ENCODE measurements at regions of chr17 and their contacts with region 1.

Region 1: GRCh38 chr17:81860756-81861518 is 602 bp upstream of the P4HB start:
- DNase-seq: peak; percentile 99
- H3K4me3 Mint-ChIP-seq: peak overlapping the region; percentile 91
- H3K27ac Mint-ChIP-seq: peak overlapping the region; percentile 94
- H3K4me1 Mint-ChIP-seq: peaks cover 31% of the 10 kb centered on the region
- H3K27me3 Mint-ChIP-seq: peaks cover 3% of the 10 kb centered on the region

Region 2: DNA sequence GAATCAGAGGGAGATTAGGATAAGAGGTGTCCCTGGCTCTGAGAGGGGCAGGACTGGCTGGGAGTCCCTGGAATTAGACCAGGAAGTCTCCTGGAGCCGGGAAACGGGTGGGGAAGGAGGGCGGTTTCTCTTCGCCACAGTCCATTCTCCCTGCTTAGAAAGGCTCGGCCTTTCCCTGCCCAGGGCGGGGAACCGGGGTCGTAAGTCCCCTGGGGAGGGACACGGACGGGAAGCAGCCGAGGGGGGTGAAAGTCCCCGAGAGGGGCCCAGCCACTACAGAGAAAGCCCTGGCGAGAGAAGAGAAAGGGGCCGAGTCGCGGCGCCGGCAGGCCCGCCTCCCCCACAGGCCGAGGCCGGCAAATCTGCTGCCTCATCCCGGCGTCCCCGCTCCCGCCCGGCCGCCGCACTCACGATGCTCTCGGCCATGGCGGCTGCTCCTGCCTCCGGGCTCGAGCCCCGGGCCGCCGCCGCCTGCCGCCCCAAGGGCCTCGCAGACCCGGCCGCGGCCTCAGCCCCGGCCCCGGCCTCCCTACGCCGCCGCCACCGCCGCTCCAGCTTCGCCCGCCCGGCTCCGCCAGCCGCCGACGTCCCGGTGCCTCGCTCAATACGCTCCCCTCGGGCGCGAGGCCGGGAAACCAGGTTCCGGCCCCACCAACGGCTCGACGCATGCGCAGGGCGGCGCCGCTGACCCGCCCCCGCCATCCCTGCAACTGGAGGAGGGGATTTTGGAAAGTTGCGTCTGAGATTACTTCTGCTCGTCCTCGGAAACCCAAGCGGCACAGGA is 224.2 kb before region 1 on chr17 and contains the starts of genes NPLOC4 and TSPAN10:
- intact Hi-C with region 1: loop called (anchors 1 kb)
- DNase-seq: peak; percentile 81
- H3K4me3 Mint-ChIP-seq: peak within 1 kb of the TSS; percentile 92
- H3K27ac Mint-ChIP-seq: peak within 1 kb of the TSS; percentile 80
- H3K4me1 Mint-ChIP-seq: peaks cover 16% of the 10 kb centered on the region
- H3K27me3 Mint-ChIP-seq: peaks cover 5% of the 10 kb centered on the region
- total RNA-seq, gene NPLOC4: 138 and 157 TPM in 2 replicates
- total RNA-seq, gene TSPAN10: 0.21 and 0.66 TPM in 2 replicates

Region 3: DNA sequence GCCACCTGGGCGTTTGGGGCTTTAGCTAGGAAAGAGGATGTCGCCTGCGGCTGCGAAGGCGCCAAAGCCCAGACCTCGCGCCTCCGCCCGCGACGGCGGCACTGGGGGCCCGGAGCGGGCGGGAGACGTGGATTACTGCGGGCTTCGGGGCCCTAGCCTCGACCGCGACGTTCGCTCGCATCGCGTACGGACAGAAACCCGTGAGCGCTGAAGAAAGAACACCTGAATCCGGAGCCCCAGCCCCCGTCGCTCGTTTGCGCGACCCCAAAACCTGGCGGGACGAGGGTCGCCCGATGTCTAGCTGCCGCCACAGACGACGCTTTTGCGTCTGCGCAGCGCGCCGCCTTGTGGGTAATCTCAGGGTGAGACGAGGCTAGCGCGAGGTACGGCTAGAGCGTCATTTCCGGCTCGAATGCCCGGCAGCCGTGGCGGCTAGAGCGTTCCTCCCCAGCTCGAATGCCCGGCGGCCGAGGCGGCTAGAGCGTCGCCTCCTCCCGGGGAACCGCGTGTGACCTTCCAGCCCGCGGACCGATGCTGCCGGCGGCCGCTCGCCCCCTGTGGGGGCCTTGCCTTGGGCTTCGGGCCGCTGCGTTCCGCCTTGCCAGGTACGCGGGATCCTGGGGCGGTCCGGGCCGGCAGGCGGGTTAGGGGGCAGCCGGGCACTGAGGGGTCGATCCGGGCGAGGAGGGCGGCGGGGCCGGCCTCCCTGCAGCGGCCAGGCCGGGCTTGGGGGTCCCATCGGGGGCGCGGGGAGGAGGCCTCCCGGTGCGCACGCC is 157.8 kb before region 1 on chr17 and contains the start of gene MRPL12:
- intact Hi-C with region 1: loop called (anchors 1 kb)
- DNase-seq: peak; percentile 87
- H3K4me3 Mint-ChIP-seq: peak within 1 kb of the TSS; percentile 98
- H3K27ac Mint-ChIP-seq: peak within 1 kb of the TSS; percentile 97
- H3K4me1 Mint-ChIP-seq: peaks cover 18% of the 10 kb centered on the region
- H3K27me3 Mint-ChIP-seq: no peaks in the 10 kb centered on the region
- total RNA-seq, gene MRPL12: 232 TPM in 2 replicates

Region 4: DNA sequence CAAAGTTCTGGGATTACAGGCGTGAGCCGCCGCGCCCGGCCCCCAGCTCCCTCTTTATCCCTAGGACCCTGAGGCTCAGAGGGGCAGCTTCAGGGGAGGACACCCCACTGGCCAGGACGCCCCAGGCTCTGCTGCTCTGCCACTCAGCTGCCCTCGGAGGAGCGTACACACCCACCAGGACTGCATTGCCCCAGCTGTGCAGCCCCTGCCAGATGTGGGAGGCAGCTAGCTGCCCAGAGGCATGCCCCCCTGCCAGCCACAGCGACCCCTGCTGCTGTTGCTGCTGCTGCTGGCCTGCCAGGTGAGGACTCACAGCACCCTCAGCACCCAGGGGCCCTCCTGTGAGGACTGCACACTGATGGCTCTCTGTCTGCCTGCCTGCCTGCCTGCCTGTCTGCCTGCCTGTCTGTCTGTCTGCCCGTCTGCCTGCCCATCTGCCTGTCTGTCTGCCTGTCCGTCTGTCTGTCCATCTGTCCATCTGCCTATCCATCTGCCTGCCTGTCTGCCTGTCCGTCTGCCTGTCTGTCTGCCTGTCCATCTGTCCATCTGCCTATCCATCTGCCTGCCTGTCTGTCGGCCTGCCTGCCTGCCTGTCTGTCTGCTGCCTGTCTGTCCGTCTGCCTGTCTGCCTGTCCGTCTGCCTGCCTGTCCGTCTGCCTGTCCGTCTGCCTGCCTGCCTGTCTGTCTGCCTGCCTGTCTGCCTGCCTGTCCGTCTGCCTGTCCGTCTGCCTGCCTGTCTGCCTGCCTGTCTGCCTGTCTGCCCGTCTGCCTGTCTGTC is 52.0 kb before region 1 on chr17:
- intact Hi-C with region 1: no loop called
- DNase-seq: no peak
- H3K4me3 Mint-ChIP-seq: no peak overlapping the region
- H3K27ac Mint-ChIP-seq: no peak overlapping the region
- H3K4me1 Mint-ChIP-seq: no peaks in the 10 kb centered on the region
- H3K27me3 Mint-ChIP-seq: peaks cover 18% of the 10 kb centered on the region

Region 5: GRCh38 chr17:81833160-81833920 is 27.6 kb before region 1 on chr17 and contains the start of gene MCRIP1:
- intact Hi-C with region 1: loop called (anchors 1 kb)
- DNase-seq: peak; percentile 95
- H3K4me3 Mint-ChIP-seq: peak within 1 kb of the TSS; percentile 93
- H3K27ac Mint-ChIP-seq: peak within 1 kb of the TSS; percentile 92
- H3K4me1 Mint-ChIP-seq: peaks cover 16% of the 10 kb centered on the region
- H3K27me3 Mint-ChIP-seq: no peaks in the 10 kb centered on the region
- total RNA-seq, gene MCRIP1: 56.0 and 62.3 TPM in 2 replicates

Region 6: GRCh38 chr17:81911277-81911961 is 50.5 kb after region 1 on chr17 and contains the start of gene PCYT2:
- intact Hi-C with region 1: loop called (anchors 1 kb)
- DNase-seq: peak; percentile 91
- H3K4me3 Mint-ChIP-seq: peak within 1 kb of the TSS; percentile 88
- H3K27ac Mint-ChIP-seq: peak within 1 kb of the TSS; percentile 61
- H3K4me1 Mint-ChIP-seq: peaks cover 26% of the 10 kb centered on the region
- H3K27me3 Mint-ChIP-seq: no peaks in the 10 kb centered on the region
- total RNA-seq, gene PCYT2: 49.5 and 54.5 TPM in 2 replicates

Region 7: DNA sequence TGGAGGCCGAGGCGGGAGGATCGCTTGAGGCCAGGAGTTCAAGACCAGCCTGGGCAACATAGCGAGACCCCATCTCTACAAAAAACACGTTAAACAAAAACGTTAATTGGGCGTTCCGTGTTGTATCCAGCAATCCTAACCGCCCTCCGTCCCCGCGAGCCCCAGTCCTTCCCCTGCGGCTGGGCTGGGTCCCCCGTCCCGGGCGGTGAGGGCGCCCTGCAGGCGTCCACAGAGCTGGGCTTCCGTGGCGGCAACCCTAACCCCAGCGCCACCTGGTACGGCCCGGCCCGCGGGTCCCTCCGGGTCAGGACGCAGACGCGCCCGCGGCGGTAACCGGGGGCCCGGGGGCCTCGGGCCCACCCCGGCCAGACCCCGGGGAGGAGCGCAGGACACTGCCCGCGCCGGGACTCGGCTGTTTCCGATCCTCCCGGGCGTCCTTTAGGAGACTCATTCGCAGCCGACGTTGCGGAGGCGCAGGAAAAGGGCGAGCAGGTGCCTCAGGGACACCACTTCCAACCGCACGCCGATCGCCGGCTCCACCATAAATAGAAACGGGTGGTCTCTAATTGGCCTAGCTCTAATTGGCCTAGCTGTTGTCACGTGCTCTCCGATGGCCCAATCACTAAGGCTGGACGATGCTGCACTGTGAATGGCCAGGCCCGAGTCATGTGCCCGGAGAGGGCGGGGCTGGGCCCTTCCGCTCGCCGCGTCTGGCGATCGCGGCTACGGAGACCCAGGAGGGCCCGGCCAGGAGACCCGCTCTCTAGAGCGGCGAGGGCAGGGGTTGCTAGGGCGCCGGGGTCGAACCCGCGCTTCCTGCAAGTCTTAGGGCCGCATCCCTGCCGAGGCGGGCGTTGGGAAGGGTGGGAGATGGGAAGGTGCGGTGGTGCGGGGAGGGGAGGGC is 431.6 kb after region 1 on chr17:
- intact Hi-C with region 1: loop called (anchors 10 kb)
- DNase-seq: peak; percentile 92
- H3K4me3 Mint-ChIP-seq: peak overlapping the region; percentile 90
- H3K27ac Mint-ChIP-seq: peak overlapping the region; percentile 93
- H3K4me1 Mint-ChIP-seq: peaks cover 48% of the 10 kb centered on the region
- H3K27me3 Mint-ChIP-seq: peaks cover 2% of the 10 kb centered on the region